MCF 10A (cell line): ENCODE measurements at regions of chr9 and their contacts with region 1.

Region 1: DNA sequence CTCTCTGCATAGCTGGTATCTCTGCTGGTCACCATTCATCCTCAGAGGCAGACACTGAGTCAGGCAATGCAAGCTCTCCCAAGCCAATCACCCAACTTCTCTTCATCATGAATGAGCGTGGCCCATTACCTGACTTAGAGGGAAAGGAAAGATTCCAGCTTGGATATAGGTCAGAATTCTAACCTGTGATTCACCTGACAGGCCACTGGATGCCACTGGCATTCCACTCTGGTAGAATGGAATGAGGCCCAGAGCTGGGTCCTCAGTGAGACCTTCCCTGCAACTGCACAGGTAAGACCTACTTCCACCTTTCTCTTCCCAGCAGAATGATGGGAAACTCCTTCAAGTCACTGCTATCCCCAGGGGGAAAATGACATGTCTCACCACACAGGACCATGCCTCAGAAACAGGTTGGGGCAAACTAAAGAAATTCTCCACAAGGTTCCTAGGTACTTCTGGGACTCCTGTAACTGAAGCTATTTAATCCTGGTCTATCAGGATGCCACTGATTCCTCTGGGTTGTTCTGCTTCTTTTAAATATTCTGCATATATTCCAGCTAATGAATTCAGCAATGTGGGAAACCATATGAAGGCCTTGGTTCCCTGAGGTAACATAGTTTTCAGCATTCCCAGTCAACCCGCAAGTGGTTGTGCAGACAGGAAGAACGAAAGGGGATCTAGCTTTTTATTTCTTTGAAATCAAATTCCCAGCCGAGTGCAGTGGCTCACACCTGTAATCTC is 62.0 kb downstream of the SUSD1 start:
- DNase-seq: peak; percentile 76
- H3K4me3 Mint-ChIP-seq: no peak overlapping the region
- H3K27ac Mint-ChIP-seq: peak overlapping the region; percentile 78
- H3K4me1 Mint-ChIP-seq: peaks cover 23% of the 10 kb centered on the region
- H3K27me3 Mint-ChIP-seq: no peaks in the 10 kb centered on the region
- CTCF ChIP-seq: peak; percentile 85

Region 2: DNA sequence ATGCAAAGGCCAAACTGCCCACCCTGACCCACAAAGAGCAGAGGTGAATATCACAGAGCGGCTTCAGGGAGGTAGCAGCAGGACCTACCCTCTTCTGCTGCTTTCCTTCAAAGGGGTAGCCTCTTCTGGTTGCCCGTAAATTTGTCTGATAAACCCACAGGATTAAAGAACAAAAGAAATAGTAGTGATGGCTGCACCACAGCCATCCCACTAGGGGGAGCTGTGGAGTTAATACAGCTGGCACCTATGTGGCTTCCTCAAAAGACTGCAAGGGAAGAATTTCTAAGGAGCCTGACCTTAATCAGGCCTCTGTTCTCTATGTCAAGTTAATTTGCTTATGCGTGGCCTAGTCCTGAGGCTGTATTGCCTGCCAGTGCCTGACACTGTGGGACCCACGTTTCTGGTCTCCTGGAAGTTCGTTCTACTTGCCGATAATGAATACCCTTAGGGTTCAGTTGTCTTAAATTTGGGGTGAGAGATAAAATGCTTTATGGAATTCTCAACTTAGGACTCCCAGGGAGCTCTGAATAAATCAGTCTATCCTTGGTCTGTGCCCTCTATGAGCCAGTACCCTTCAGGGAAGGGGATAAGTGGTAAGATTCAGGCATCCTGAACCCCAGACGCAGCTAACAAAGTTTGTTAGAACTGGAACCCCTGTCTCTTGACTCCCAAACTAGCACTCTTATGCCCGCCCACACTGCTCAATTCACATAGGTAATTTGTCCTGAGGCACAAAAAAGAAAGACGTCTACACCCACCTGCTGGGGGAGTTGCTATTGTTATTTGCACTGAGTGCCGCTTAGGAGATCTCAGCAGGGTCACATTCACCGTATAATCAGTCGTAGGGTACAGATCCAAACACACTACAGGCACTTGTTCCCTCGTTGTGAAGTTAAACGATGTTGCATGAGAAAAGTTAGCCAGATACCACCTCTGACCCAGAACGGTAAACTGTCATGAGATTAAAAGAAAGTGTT is 15.1 kb before region 1 on chr9:
- CTCF ChIA-PET with region 1: interaction called, 37 read pairs
- POLR2A ChIA-PET with region 1: interaction called, 4 read pairs
- intact Hi-C with region 1: no loop called
- DNase-seq: peak; percentile 79
- H3K4me3 Mint-ChIP-seq: no peak overlapping the region
- H3K27ac Mint-ChIP-seq: no peak overlapping the region
- H3K4me1 Mint-ChIP-seq: no peaks in the 10 kb centered on the region
- H3K27me3 Mint-ChIP-seq: no peaks in the 10 kb centered on the region
- CTCF ChIP-seq: peak; percentile 75

Region 3: DNA sequence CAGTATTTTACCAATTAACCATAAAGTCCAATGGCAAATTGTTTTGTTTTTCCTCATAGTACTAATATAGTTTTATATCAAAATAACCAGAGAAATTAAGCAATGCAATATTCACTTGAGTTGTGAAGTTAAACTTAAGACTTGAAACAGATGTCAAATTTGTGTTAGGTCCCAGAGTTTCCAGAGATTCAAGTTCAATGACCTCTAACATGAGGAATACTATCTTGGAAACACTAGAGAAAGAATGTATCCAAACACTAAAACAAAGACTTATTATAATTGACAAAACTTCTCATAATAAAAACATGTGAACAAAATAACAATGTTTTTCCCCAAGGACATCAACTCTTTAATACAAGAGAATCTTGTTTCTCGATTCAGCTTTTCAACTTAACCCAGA is 44.0 kb after region 1 on chr9:
- CTCF ChIA-PET with region 1: interaction called, 12 read pairs
- POLR2A ChIA-PET with region 1: no interaction called
- intact Hi-C with region 1: no loop called
- DNase-seq: no peak
- H3K4me3 Mint-ChIP-seq: no peak overlapping the region
- H3K27ac Mint-ChIP-seq: no peak overlapping the region
- H3K4me1 Mint-ChIP-seq: no peaks in the 10 kb centered on the region
- H3K27me3 Mint-ChIP-seq: no peaks in the 10 kb centered on the region
- CTCF ChIP-seq: no peak

Region 4: DNA sequence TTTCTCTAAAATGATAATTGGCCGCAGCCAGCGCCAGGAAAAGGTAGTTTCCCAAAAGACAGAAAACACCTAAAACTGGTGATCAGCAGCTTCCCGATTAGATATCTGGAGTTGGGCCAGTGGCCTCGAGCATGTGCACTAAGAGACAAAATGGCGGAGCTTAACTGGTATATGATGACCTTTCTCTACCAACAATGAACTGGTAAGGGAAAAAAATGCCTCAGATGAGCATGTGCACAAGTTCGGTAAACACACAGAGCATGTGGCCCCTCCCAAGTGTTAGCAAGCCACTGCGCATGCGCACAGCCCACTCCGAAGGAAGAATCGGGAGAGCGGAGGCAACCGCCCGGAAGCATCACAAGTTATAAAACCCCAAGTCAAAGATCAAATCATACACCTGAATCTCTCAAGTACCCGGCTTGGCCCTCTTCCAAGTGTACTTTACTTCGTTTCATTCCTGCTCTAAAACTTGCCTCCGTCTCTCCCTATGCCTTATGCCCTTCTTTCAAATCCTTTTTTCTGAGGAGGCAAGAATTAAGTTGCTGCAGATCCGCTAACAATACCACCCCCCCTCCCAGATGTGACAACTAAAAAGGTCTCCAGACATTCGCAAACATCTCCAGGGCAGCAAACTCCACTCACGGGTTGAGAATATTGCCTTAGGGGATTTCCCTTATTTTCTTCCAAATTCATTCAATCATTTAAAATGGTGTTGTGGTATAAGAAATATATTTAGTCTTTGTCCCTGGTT is 235.3 kb after region 1 on chr9:
- CTCF ChIA-PET with region 1: interaction called, 18 read pairs
- POLR2A ChIA-PET with region 1: interaction called, 3 read pairs
- intact Hi-C with region 1: no loop called
- DNase-seq: peak; percentile 47
- H3K4me3 Mint-ChIP-seq: peak overlapping the region; percentile 65
- H3K27ac Mint-ChIP-seq: peak overlapping the region; percentile 77
- H3K4me1 Mint-ChIP-seq: peaks cover 8% of the 10 kb centered on the region
- H3K27me3 Mint-ChIP-seq: no peaks in the 10 kb centered on the region
- CTCF ChIP-seq: no peak

Region 5: GRCh38 chr9:112379177-112380101 is 266.3 kb after region 1 on chr9:
- CTCF ChIA-PET with region 1: interaction called, 13 read pairs
- POLR2A ChIA-PET with region 1: interaction called, 23 read pairs
- intact Hi-C with region 1: no loop called
- DNase-seq: peak; percentile 98
- H3K4me3 Mint-ChIP-seq: peak overlapping the region; percentile 93
- H3K27ac Mint-ChIP-seq: peak overlapping the region; percentile 83
- H3K4me1 Mint-ChIP-seq: peaks cover 34% of the 10 kb centered on the region
- H3K27me3 Mint-ChIP-seq: no peaks in the 10 kb centered on the region
- CTCF ChIP-seq: no peak

Region 6: GRCh38 chr9:112819635-112820496 is 706.8 kb after region 1 on chr9:
- CTCF ChIA-PET with region 1: interaction called, 16 read pairs
- POLR2A ChIA-PET with region 1: no interaction called
- intact Hi-C with region 1: loop called (anchors 5 kb)
- DNase-seq: peak; percentile 67
- H3K4me3 Mint-ChIP-seq: no peak overlapping the region
- H3K27ac Mint-ChIP-seq: no peak overlapping the region
- H3K4me1 Mint-ChIP-seq: peaks cover 8% of the 10 kb centered on the region
- H3K27me3 Mint-ChIP-seq: no peaks in the 10 kb centered on the region
- CTCF ChIP-seq: peak; percentile 64

Region 7: DNA sequence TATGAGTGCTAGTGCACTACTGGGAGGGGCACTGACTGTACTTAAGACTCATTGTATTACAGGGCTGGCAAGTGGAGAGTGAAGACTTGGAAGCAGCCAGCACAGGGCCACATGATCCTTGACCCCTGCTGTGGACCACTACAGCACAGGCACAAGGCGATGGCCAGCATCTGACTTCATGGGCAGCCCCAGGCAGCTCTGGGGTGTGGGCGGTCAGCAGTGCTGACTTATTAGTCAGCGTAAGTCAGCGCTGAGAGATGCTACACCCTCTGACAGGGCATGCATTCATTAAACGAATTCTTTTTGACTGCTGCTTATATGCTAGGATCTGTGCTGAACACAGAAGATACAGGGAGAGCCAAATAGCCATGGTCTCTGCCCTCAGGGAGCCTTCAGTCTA is 768.3 kb after region 1 on chr9:
- CTCF ChIA-PET with region 1: no interaction called
- POLR2A ChIA-PET with region 1: no interaction called
- intact Hi-C with region 1: no loop called
- DNase-seq: peak; percentile 45
- H3K4me3 Mint-ChIP-seq: no peak overlapping the region
- H3K27ac Mint-ChIP-seq: no peak overlapping the region
- H3K4me1 Mint-ChIP-seq: peaks cover 19% of the 10 kb centered on the region
- H3K27me3 Mint-ChIP-seq: no peaks in the 10 kb centered on the region
- CTCF ChIP-seq: no peak